ENCODE measurements at regions of chr17 and their contacts with region 1.

Region 1: GRCh38 chr17:61412143-61412859 is 12.7 kb downstream of the TBX2 start:
- DNase-seq: peak; percentile 79
- H3K4me3 Mint-ChIP-seq: peak overlapping the region; percentile 63
- H3K27ac Mint-ChIP-seq: no peak overlapping the region
- H3K4me1 Mint-ChIP-seq: peaks cover 23% of the 10 kb centered on the region
- H3K27me3 Mint-ChIP-seq: peaks cover 35% of the 10 kb centered on the region

Region 2: GRCh38 chr17:60971515-60972369 is 440.6 kb before region 1 on chr17:
- CTCF ChIA-PET with region 1: interaction called, 8 read pairs
- intact Hi-C with region 1: loop called (anchors 2 kb)
- DNase-seq: peak; percentile 69
- H3K4me3 Mint-ChIP-seq: no peak overlapping the region
- H3K27ac Mint-ChIP-seq: no peak overlapping the region
- H3K4me1 Mint-ChIP-seq: no peaks in the 10 kb centered on the region
- H3K27me3 Mint-ChIP-seq: no peaks in the 10 kb centered on the region

Region 3: GRCh38 chr17:61389670-61390478 is 22.4 kb before region 1 on chr17:
- CTCF ChIA-PET with region 1: interaction called, 10 read pairs
- intact Hi-C with region 1: no loop called
- DNase-seq: peak; percentile 59
- H3K4me3 Mint-ChIP-seq: no peak overlapping the region
- H3K27ac Mint-ChIP-seq: no peak overlapping the region
- H3K4me1 Mint-ChIP-seq: peaks cover 4% of the 10 kb centered on the region
- H3K27me3 Mint-ChIP-seq: peaks cover 10% of the 10 kb centered on the region

Region 4: GRCh38 chr17:61442136-61442775 is 30.0 kb after region 1 on chr17:
- CTCF ChIA-PET with region 1: no interaction called
- intact Hi-C with region 1: no loop called
- DNase-seq: no peak
- H3K4me3 Mint-ChIP-seq: no peak overlapping the region
- H3K27ac Mint-ChIP-seq: no peak overlapping the region
- H3K4me1 Mint-ChIP-seq: no peaks in the 10 kb centered on the region
- H3K27me3 Mint-ChIP-seq: peaks cover 30% of the 10 kb centered on the region

Region 5: GRCh38 chr17:61551255-61551742 is 139.0 kb after region 1 on chr17:
- CTCF ChIA-PET with region 1: interaction called, 7 read pairs
- intact Hi-C with region 1: loop called (anchors 1 kb)
- DNase-seq: no peak
- H3K4me3 Mint-ChIP-seq: no peak overlapping the region
- H3K27ac Mint-ChIP-seq: no peak overlapping the region
- H3K4me1 Mint-ChIP-seq: peaks cover 3% of the 10 kb centered on the region
- H3K27me3 Mint-ChIP-seq: peaks cover 25% of the 10 kb centered on the region

Region 6: DNA sequence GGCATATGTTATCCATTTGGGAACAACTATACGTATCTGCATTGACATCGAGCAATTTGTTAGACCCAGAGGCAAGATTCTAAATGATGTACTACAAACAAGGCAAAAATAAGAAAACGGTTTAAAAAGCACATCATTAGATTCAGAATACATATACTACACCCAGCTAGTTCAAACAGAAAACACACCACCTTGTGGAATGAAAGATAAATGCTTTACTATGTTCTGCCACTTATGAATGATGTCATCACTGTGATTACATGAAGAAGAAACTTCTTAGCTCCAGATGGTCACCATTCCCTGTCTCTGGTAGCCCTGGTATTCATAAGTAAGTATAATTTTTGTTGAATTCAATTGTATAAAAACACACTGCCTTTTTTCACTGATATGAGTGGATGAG is 170.9 kb after region 1 on chr17:
- CTCF ChIA-PET with region 1: interaction called, 6 read pairs
- intact Hi-C with region 1: loop called (anchors 2 kb)
- DNase-seq: no peak
- H3K4me3 Mint-ChIP-seq: no peak overlapping the region
- H3K27ac Mint-ChIP-seq: no peak overlapping the region
- H3K4me1 Mint-ChIP-seq: no peaks in the 10 kb centered on the region
- H3K27me3 Mint-ChIP-seq: peaks cover 10% of the 10 kb centered on the region

Region 7: DNA sequence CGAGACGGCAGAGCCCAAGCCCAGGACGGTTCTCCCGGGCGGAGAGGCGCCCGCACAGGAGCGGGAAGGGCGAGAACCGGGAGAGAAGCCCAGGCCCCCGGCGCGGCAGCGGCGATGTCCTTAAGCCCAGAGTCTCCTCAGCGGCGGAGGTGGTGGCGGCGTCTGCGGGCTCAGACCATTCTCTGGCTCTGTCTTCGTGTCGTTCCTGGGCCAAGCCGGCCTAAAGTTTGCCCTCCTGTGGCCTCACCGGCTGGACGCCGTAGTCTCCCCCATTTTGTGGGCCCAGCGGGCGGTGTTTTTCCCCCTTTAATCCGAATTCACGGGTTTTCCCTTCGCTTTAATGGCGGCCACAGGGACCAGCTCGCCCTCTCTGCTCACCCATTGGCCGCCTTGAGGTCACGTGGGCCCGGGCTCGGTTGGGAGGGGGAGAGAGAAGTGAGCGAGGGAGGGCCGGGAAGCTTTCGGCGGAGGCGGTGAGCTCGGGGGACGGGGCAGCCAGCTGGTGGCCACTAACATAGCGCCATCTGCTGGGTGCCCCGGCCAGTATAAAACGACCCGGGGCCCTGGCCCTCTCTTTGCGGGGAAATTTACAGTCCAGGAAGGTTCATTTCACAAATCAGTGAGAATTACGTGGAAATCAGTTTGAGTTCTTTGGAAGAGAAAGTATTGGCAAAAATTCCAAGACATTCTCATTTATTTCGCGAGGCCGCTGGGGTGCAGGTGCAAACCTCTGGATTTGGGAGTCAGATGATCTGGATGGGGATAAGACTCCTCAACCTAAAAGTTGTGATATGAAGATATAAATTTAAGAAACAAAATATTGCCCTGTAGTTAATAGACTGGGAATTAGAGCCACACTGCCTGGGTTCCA is 653.5 kb after region 1 on chr17:
- CTCF ChIA-PET with region 1: interaction called, 3 read pairs
- intact Hi-C with region 1: loop called (anchors 1 kb)
- DNase-seq: peak; percentile 99
- H3K4me3 Mint-ChIP-seq: peak overlapping the region; percentile 95
- H3K27ac Mint-ChIP-seq: peak overlapping the region; percentile 98
- H3K4me1 Mint-ChIP-seq: peaks cover 28% of the 10 kb centered on the region
- H3K27me3 Mint-ChIP-seq: no peaks in the 10 kb centered on the region

Measured in activated naive CD4-positive, alpha-beta T cell treated with anti-CD3 and anti-CD28 coated beads for 36 hours (primary cell).